ENCODE measurements at regions of chr12 and their contacts with region 1.

Region 1: DNA sequence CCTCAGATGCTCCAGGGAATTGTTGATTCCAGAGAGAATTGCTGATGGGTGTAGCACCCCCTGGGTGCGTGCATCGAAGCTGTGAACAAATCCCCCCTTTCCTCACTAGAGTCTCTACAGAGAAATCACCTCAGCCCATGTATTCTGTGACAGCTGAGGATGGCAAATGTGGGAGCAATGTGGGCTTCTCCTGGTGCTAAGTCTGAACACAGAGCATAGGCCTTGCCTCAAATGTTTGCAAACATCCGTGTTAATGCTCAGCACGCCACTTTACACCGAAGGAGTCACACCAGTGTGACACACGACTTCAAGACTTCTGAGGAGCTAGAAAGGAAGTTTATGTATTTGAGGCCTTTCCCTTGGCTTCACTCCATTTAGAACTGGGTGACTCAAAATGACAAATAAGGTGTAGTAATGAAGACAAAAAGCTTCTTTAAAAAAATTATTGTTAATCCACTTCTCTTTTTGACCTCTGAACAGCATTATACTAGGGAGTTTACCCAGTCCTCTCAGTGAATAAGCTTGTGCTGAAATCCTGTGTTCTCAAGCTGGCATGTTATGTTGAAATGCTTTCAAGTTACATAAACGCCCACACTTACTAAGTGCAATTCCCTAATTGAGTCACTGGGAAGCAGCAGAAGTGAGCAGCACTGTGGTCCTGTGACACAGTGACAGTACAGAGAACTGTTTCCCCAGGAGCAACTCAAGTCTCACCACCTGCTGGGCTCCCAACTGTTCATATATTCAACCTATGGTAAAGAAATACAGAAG is 92.9 kb downstream of the FAR2 start:
- DNase-seq: no peak
- H3K4me3 Mint-ChIP-seq: no peak overlapping the region
- H3K27ac Mint-ChIP-seq: peak overlapping the region; percentile 21
- H3K4me1 Mint-ChIP-seq: peaks cover 22% of the 10 kb centered on the region
- H3K27me3 Mint-ChIP-seq: peaks cover 4% of the 10 kb centered on the region

Region 2: GRCh38 chr12:29082522-29082921 is 159.5 kb before region 1 on chr12:
- intact Hi-C with region 1: loop called (anchors 1 kb)
- DNase-seq: no peak
- H3K4me3 Mint-ChIP-seq: no peak overlapping the region
- H3K27ac Mint-ChIP-seq: no peak overlapping the region
- H3K4me1 Mint-ChIP-seq: no peaks in the 10 kb centered on the region
- H3K27me3 Mint-ChIP-seq: peaks cover 39% of the 10 kb centered on the region

Region 3: DNA sequence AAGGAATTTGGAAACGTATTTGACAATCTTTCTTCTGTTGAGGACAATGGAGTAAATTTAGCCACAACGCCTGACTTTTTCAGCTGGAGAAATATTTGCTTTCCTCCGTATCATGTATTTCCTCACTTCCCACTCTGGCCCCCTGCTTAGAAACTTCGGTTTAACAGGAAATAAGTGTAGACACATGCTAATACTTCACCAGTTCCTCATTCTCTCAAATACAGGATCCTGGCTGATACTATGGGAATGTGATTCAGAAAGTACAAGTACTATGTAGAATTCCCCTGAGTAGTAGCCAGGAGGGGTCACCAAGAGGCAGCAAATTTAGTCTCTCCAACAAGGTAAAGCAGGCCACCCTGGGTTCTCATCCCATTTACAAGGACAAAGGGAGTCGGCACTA is 34.9 kb before region 1 on chr12:
- intact Hi-C with region 1: no loop called
- DNase-seq: no peak
- H3K4me3 Mint-ChIP-seq: no peak overlapping the region
- H3K27ac Mint-ChIP-seq: no peak overlapping the region
- H3K4me1 Mint-ChIP-seq: no peaks in the 10 kb centered on the region
- H3K27me3 Mint-ChIP-seq: peaks cover 1% of the 10 kb centered on the region

Region 4: GRCh38 chr12:29354954-29355353 is 112.9 kb after region 1 on chr12:
- intact Hi-C with region 1: no loop called
- DNase-seq: no peak
- H3K4me3 Mint-ChIP-seq: no peak overlapping the region
- H3K27ac Mint-ChIP-seq: no peak overlapping the region
- H3K4me1 Mint-ChIP-seq: no peaks in the 10 kb centered on the region
- H3K27me3 Mint-ChIP-seq: no peaks in the 10 kb centered on the region

Measured in activated T-helper 1 cell treated with anti-CD3 and anti-CD28 coated beads, Interleukin-12 subunit alpha, Interleukin-12 subunit beta, Interleukin-2, Interleukin-4 antibody, amounts not matched to agents 30 ng/mL and 10 ng/mL and 1 ng/mL, durations not matched to agents 14 hours and 24 hours and 36 hours (primary cell).